ENCODE measurements at regions of chr12 and their contacts with region 1.

Region 1: DNA sequence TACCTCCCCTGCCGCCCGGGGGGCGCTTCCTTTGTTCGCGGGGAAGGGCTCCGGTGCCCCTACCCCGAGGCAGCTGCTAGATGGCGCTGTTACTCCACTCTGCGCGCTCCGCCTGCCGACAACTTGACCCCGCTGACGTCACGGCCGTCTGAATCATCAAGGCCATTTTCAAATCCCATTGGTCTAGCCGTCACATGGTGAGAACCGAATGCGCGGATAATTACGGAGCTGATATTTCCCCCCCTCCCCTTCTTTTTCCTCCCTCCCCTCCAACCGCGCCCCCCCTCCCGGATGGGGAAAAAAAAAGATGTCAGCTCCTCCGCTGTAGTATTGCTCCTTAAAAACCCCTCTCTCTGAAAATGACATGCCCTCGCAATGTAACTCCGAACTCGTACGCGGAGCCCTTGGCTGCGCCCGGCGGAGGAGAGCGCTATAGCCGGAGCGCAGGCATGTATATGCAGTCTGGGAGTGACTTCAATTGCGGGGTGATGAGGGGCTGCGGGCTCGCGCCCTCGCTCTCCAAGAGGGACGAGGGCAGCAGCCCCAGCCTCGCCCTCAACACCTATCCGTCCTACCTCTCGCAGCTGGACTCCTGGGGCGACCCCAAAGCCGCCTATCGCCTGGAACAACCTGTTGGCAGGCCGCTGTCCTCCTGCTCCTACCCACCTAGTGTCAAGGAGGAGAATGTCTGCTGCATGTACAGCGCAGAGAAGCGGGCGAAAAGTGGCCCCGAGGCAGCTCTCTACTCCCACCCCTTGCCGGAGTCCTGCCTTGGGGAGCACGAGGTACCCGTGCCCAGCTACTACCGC is at the start of gene HOXC10:
- DNase-seq: peak; percentile 62
- H3K4me3 Mint-ChIP-seq: peak within 1 kb of the TSS; percentile 48
- H3K27ac Mint-ChIP-seq: peak within 1 kb of the TSS; percentile 61
- H3K4me1 Mint-ChIP-seq: peaks cover 21% of the 10 kb centered on the region
- H3K27me3 Mint-ChIP-seq: peaks cover 93% of the 10 kb centered on the region
- total RNA-seq, gene HOXC10: not detected in 2 replicates

Region 2: DNA sequence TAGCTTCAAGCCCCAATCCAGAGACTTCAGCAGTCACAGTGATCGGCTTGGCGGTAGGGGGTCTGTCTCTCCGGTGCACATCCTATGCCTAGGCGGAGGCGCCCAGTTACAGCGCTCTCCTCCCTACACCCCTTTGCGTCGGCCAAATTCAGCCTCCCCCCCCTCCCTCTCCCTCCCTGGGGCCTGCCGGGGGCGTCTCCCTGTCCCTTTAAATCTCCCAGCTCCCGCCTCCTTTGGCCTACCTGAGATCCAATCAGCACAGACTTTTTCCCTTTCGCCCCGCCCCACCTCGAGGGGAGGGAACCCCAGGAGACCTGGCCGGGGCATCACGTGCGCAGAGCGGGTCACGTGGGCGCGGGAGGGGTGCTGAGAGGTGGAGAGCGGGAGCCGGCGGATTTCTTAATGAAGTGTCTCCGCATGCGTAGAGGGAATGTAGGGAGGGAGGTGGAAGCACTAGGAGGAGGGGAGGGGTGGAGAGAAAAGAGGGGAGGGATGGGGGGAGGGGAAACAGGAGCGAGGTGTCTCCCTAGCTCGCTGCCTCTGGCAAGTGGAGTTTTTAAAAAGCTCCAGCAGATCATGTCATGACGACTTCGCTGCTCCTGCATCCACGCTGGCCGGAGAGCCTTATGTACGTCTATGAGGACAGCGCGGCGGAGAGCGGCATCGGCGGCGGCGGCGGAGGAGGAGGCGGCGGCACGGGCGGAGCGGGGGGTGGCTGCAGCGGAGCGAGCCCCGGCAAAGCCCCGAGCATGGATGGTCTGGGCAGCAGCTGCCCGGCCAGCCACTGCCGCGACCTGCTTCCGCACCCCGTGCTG is 46.6 kb before region 1 on chr12 and contains the start of gene HOXC13:
- intact Hi-C with region 1: loop called (anchors 10 kb)
- DNase-seq: no peak
- H3K4me3 Mint-ChIP-seq: no peak within 1 kb of the TSS
- H3K27ac Mint-ChIP-seq: peak within 1 kb of the TSS; percentile 31
- H3K4me1 Mint-ChIP-seq: no peaks in the 10 kb centered on the region
- H3K27me3 Mint-ChIP-seq: peaks cover 79% of the 10 kb centered on the region
- total RNA-seq, gene HOXC13: not detected in 2 replicates

Region 3: GRCh38 chr12:53965281-53966084 is 19.6 kb before region 1 on chr12:
- intact Hi-C with region 1: loop called (anchors 2 kb)
- DNase-seq: no peak
- H3K4me3 Mint-ChIP-seq: no peak overlapping the region
- H3K27ac Mint-ChIP-seq: peak overlapping the region; percentile 30
- H3K4me1 Mint-ChIP-seq: peaks cover 6% of the 10 kb centered on the region
- H3K27me3 Mint-ChIP-seq: peaks cover 90% of the 10 kb centered on the region

Region 4: GRCh38 chr12:53995378-53996239 is 10.5 kb after region 1 on chr12:
- intact Hi-C with region 1: loop called (anchors 2 kb)
- DNase-seq: no peak
- H3K4me3 Mint-ChIP-seq: peak overlapping the region; percentile 80
- H3K27ac Mint-ChIP-seq: peak overlapping the region; percentile 76
- H3K4me1 Mint-ChIP-seq: peaks cover 22% of the 10 kb centered on the region
- H3K27me3 Mint-ChIP-seq: peaks cover 87% of the 10 kb centered on the region

Region 5: GRCh38 chr12:54032627-54033100 is 47.6 kb after region 1 on chr12 and contains the start of gene HOXC5:
- intact Hi-C with region 1: no loop called
- DNase-seq: peak; percentile 48
- H3K4me3 Mint-ChIP-seq: peak within 1 kb of the TSS; percentile 49
- H3K27ac Mint-ChIP-seq: peak within 1 kb of the TSS; percentile 52
- H3K4me1 Mint-ChIP-seq: peaks cover 20% of the 10 kb centered on the region
- H3K27me3 Mint-ChIP-seq: peaks cover 79% of the 10 kb centered on the region
- total RNA-seq, gene HOXC5: not detected in 2 replicates

Measured in activated T-helper 1 cell treated with anti-CD3 and anti-CD28 coated beads, Interleukin-12 subunit alpha, Interleukin-12 subunit beta, Interleukin-2, Interleukin-4 antibody, amounts not matched to agents 30 ng/mL and 10 ng/mL and 1 ng/mL, durations not matched to agents 14 hours and 24 hours and 36 hours (primary cell).